GM12878 (cell line): ENCODE measurements at regions of chr3 and their contacts with region 1.

Region 1: DNA sequence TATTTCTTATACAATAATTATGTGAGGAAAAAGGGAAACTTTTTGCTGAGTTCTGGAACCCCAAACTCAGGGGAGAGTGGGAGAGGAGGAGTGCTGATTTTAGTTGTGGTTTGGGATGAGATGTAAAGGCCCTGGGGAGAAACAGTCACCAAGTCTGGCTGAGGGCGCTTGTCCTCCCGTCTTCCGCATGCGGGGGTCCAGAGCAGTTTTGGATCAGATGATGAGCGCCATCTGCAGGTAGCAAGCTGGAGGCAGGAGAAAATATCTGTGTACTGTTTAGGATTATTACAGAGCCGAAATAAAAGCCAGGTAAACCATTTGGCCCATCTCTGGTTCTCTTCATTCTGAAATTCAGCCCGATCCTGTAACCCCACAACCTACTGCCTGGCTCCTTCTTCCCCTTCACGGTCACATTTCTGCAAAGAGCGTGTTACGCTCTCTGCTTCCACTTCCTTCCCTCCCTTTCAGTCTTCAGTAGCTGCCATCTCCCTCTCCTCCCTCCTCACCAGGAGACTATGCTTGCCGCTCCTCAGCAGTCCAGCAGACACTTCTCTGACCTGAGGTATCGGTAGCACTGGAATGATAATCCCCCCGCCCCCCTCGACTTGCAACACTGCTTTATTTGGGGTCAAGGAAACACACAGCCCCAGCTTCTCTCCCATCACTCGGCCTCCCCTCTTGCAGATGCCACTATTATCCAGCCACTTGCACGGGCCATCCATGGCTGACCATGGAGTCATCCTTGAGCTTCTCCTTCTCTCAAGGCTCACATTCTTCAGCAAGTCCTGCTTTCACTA is 1.4 kb upstream of the PARP14 start:
- DNase-seq: no peak
- ATAC-seq: peak; percentile 70
- H3K4me3 ChIP-seq: peak overlapping the region; percentile 97
- H3K27ac ChIP-seq: peak overlapping the region; percentile 97
- H3K4me1 ChIP-seq: peaks cover 16% of the 10 kb centered on the region
- H3K27me3 ChIP-seq: no peaks in the 10 kb centered on the region
- CTCF ChIP-seq: peak; percentile 75 to 91 (median 80)
- EP300 ChIP-seq: peak in 1 of 2 experiments; percentile 6; a peak in 1 of 4 replicates
- POLR2A ChIP-seq: no peak
- RAD21 ChIP-seq: peak; percentile 95

Region 2: DNA sequence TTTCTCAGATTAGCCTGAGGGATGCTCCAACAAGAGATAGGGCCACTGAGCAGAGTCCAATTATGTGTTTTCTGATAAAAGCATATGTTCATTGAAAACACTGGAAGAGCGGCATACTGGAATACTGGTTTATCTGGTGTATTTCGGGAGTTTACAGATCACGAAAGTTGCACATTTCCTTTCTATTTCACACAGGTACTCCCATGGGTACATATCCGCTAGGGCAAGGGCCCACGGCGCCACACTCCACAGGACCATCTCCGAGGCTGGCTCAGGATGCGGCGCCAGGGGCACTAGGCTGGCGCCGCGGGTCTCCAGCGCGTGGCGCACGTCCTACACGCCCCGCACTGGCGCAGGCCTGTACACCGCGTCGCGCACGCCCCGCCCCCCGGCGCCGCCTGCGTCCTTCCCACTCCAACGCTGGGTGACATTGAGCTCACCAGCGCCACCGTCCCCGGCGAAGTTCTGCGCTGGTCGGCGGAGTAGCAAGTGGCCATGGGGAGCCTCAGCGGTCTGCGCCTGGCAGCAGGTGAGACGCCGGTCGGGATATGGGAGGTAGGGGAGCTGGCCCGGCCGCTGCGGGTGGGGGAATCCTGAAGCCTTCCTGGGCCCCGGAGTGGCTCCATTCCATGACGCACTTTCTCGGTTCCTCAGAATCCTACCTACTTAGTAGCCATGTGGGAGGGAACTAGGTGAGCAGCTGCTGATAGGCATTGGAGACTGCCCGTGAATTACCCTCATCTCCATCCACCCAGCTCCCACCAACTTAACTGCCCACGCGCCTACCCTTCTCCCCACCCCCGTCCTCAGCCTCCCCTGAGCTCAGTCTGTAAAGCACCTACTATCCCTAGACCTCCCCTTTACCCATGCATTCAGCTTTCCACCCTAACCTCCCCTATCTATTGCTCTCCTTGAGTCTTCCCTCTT is 295.2 kb before region 1 on chr3 and contains the start of gene FAM162A:
- CTCF ChIA-PET with region 1: interaction called, 14 read pairs
- POLR2A ChIA-PET with region 1: interaction called, 3 read pairs
- RAD21 ChIA-PET with region 1: interaction called, 16 read pairs
- SMC1A ChIA-PET with region 1: interaction called, 16 read pairs
- in situ Hi-C with region 1: no loop called
- intact Hi-C with region 1: no loop called
- DNase-seq: peak; percentile 83
- ATAC-seq: peak; percentile 95
- H3K4me3 ChIP-seq: peak within 1 kb of the TSS; percentile 76
- H3K27ac ChIP-seq: peak within 1 kb of the TSS; percentile 82
- H3K4me1 ChIP-seq: peaks cover 16% of the 10 kb centered on the region
- H3K27me3 ChIP-seq: no peaks in the 10 kb centered on the region
- CTCF ChIP-seq: peak; percentile 55 to 77 (median 61); a peak in 5 of 6 replicates
- EP300 ChIP-seq: peak in 1 of 2 experiments; percentile 8; a peak in 1 of 4 replicates
- POLR2A ChIP-seq: peak; percentile 96
- RAD21 ChIP-seq: peak; percentile 38
- polyA plus RNA-seq, gene FAM162A: 290 to 297 TPM

Region 3: DNA sequence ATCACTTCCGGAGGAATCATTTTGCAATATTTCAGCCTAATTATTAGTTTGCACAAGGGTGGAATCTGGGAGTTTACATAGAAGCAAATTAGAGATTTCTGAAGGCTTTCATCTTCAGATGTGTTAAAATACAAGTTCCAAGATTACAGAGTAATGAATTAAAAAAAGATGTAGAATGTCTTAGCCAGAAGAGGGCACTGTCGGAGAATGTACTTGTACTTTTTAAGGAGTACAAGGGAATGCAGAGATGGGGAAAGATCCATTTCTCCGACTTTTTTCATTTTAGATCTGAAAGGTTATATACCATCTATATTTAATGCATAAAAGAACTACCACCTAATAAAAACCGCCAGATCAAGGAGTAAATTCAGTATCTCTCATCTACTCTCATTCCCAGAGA is 220.3 kb before region 1 on chr3:
- CTCF ChIA-PET with region 1: interaction called, 19 read pairs
- POLR2A ChIA-PET with region 1: interaction called, 5 read pairs
- RAD21 ChIA-PET with region 1: interaction called, 12 read pairs
- SMC1A ChIA-PET with region 1: interaction called, 24 read pairs
- in situ Hi-C with region 1: no loop called
- intact Hi-C with region 1: no loop called
- DNase-seq: no peak
- ATAC-seq: 0 out of 3 replicates have a peak, but pooled peaks have one; percentile 30
- H3K4me3 ChIP-seq: no peak overlapping the region
- H3K27ac ChIP-seq: no peak overlapping the region
- H3K4me1 ChIP-seq: no peaks in the 10 kb centered on the region
- H3K27me3 ChIP-seq: no peaks in the 10 kb centered on the region
- CTCF ChIP-seq: peak in 2 of 3 experiments; percentile 15 to 44; a peak in 2 of 6 replicates
- EP300 ChIP-seq: no peak
- POLR2A ChIP-seq: no peak
- RAD21 ChIP-seq: peak; percentile 63

Region 4: GRCh38 chr3:122555275-122556071 is 123.8 kb before region 1 on chr3:
- CTCF ChIA-PET with region 1: interaction called, 192 read pairs
- POLR2A ChIA-PET with region 1: interaction called, 65 read pairs
- RAD21 ChIA-PET with region 1: interaction called, 236 read pairs
- SMC1A ChIA-PET with region 1: interaction called, 250 read pairs
- in situ Hi-C with region 1: loop called (anchors 5 kb)
- intact Hi-C with region 1: loop called (anchors 1 kb)
- DNase-seq: no peak
- ATAC-seq: no peak
- H3K4me3 ChIP-seq: no peak overlapping the region
- H3K27ac ChIP-seq: no peak overlapping the region
- H3K4me1 ChIP-seq: no peaks in the 10 kb centered on the region
- H3K27me3 ChIP-seq: no peaks in the 10 kb centered on the region
- CTCF ChIP-seq: no peak
- EP300 ChIP-seq: no peak
- POLR2A ChIP-seq: no peak
- RAD21 ChIP-seq: no peak

Region 5: GRCh38 chr3:122598556-122598955 is 80.7 kb before region 1 on chr3:
- CTCF ChIA-PET with region 1: interaction called, 12 read pairs
- POLR2A ChIA-PET with region 1: no interaction called
- RAD21 ChIA-PET with region 1: interaction called, 5 read pairs
- SMC1A ChIA-PET with region 1: interaction called, 10 read pairs
- in situ Hi-C with region 1: no loop called
- intact Hi-C with region 1: no loop called
- DNase-seq: no peak
- ATAC-seq: peak; percentile 52
- H3K4me3 ChIP-seq: no peak overlapping the region
- H3K27ac ChIP-seq: no peak overlapping the region
- H3K4me1 ChIP-seq: 0 out of 2 replicates have a peak, but pooled peaks cover 3% of the 10 kb centered on the region
- H3K27me3 ChIP-seq: no peaks in the 10 kb centered on the region
- CTCF ChIP-seq: no peak
- EP300 ChIP-seq: no peak
- POLR2A ChIP-seq: no peak
- RAD21 ChIP-seq: no peak

Region 6: DNA sequence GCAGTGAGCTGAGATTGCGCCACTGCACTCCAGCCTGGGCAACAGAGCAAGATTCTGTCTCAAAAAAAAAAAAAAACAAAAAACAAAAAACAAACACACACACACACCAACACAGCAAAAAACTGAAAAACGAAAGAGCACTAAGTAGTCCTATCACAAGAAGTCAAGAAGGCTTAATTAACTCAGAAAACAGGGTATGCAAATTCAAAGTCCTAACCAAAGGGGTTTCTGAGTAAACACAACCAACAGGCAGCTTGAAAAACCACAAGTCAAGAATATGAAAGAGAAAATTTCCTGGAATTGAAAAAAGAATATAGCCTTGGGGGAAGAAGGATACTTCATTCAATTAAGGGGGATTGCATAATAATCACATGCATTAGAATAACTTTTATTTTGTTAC is 36.3 kb before region 1 on chr3:
- CTCF ChIA-PET with region 1: interaction called, 31 read pairs
- POLR2A ChIA-PET with region 1: interaction called, 10 read pairs
- RAD21 ChIA-PET with region 1: interaction called, 47 read pairs
- SMC1A ChIA-PET with region 1: interaction called, 54 read pairs
- in situ Hi-C with region 1: no loop called
- intact Hi-C with region 1: loop called (anchors 2 kb)
- DNase-seq: peak; percentile 65
- ATAC-seq: peak; percentile 78
- H3K4me3 ChIP-seq: no peak overlapping the region
- H3K27ac ChIP-seq: no peak overlapping the region
- H3K4me1 ChIP-seq: peaks cover 22% of the 10 kb centered on the region
- H3K27me3 ChIP-seq: no peaks in the 10 kb centered on the region
- CTCF ChIP-seq: no peak
- EP300 ChIP-seq: peak; percentile 38 to 43; a peak in 2 of 4 replicates
- POLR2A ChIP-seq: no peak
- RAD21 ChIP-seq: no peak

Region 7: GRCh38 chr3:122858373-122858772 is 179.1 kb after region 1 on chr3:
- CTCF ChIA-PET with region 1: no interaction called
- POLR2A ChIA-PET with region 1: no interaction called
- RAD21 ChIA-PET with region 1: no interaction called
- SMC1A ChIA-PET with region 1: no interaction called
- in situ Hi-C with region 1: no loop called
- intact Hi-C with region 1: no loop called
- DNase-seq: no peak
- ATAC-seq: no peak
- H3K4me3 ChIP-seq: no peak overlapping the region
- H3K27ac ChIP-seq: no peak overlapping the region
- H3K4me1 ChIP-seq: no peaks in the 10 kb centered on the region
- H3K27me3 ChIP-seq: no peaks in the 10 kb centered on the region
- CTCF ChIP-seq: peak in 1 of 3 experiments; percentile 25; a peak in 3 of 6 replicates
- EP300 ChIP-seq: no peak
- POLR2A ChIP-seq: no peak
- RAD21 ChIP-seq: peak; percentile 31; the same call in 1 of the 2 replicates

Region 8: DNA sequence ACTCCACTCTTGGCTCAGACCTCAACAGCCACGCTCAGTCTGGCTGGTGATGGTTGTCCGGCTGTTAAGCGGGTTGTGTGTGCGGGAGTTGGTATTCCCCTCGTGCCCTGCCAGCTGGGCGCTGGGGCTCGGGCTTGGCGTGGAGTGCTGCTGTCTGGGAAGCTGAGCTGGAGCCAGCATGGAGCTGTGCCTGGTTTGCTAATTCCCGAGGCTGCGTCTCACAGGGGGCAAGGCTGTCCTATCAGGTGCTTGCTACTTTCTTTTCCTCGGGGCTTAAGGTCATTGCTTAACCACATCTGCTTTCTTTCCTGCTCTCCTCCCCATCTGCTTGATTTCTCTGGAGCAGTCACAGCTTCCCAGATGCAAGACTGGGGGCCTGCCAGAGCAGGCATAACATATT is 417.4 kb after region 1 on chr3:
- CTCF ChIA-PET with region 1: no interaction called
- POLR2A ChIA-PET with region 1: no interaction called
- RAD21 ChIA-PET with region 1: no interaction called
- SMC1A ChIA-PET with region 1: no interaction called
- in situ Hi-C with region 1: no loop called
- intact Hi-C with region 1: no loop called
- DNase-seq: no peak
- ATAC-seq: no peak
- H3K4me3 ChIP-seq: no peak overlapping the region
- H3K27ac ChIP-seq: no peak overlapping the region
- H3K4me1 ChIP-seq: no peaks in the 10 kb centered on the region
- H3K27me3 ChIP-seq: no peaks in the 10 kb centered on the region
- CTCF ChIP-seq: no peak
- EP300 ChIP-seq: no peak
- POLR2A ChIP-seq: no peak
- RAD21 ChIP-seq: no peak